ENCODE measurements at regions of chr18 and their contacts with region 1.

Region 1: GRCh38 chr18:12606592-12607315 is 51.2 kb downstream of the SPIRE1 start:
- DNase-seq: peak; percentile 90
- H3K4me3 ChIP-seq: peak overlapping the region in 1 of 3 experiments; percentile 9
- H3K27ac ChIP-seq: peak overlapping the region; percentile 74
- H3K4me1 ChIP-seq: peaks cover 37% of the 10 kb centered on the region
- H3K27me3 ChIP-seq: no peaks in the 10 kb centered on the region
- CTCF ChIP-seq: no peak
- POLR2A ChIP-seq: no peak

Region 2: DNA sequence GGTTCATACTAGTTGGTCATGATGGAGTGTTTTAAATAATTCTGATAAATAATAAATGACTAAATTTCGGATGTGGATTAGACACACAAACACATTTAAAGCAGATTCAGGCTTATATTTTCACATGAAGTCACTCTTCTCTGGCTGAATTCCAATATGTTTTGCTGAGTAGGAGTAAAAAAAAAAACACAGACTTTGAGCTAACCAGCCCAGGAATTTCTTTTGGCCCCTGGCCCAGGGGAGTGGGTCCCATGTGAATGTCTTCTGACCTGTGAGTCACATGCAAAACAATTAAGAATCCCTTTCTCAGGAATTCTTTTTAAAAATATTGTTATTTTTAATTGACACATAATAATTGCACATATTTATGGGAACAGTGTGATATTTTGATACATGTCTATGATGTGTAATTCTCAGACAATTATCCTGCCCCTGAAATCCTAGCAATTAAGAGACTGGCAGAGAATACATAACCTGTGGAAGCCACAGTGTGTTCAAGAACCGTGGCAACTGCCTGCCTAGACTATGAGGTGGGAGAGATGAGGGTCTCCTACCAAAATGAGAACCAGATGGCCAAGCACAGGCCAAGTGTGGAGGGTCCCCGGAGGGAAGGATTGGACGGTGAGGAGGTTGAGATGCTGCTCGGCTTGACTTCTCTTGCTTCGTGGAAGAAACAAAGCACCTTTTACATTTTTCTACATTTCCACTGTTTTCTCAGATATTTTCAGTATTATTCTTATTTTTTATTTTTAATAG is 1693.8 kb before region 1 on chr18:
- CTCF ChIA-PET with region 1: no interaction called
- POLR2A ChIA-PET with region 1: no interaction called
- dilution Hi-C with region 1: no loop called
- intact Hi-C with region 1: no loop called
- DNase-seq: peak; percentile 97
- H3K4me3 ChIP-seq: no peak overlapping the region
- H3K27ac ChIP-seq: peak overlapping the region; percentile 98
- H3K4me1 ChIP-seq: peaks cover 19% of the 10 kb centered on the region
- H3K27me3 ChIP-seq: no peaks in the 10 kb centered on the region
- CTCF ChIP-seq: no peak
- POLR2A ChIP-seq: no peak

Region 3: GRCh38 chr18:12417687-12418086 is 189.1 kb before region 1 on chr18:
- CTCF ChIA-PET with region 1: no interaction called
- POLR2A ChIA-PET with region 1: no interaction called
- dilution Hi-C with region 1: no loop called
- intact Hi-C with region 1: loop called (anchors 5 kb)
- DNase-seq: no peak
- H3K4me3 ChIP-seq: no peak overlapping the region
- H3K27ac ChIP-seq: no peak overlapping the region
- H3K4me1 ChIP-seq: peaks cover 13% of the 10 kb centered on the region
- H3K27me3 ChIP-seq: no peaks in the 10 kb centered on the region
- CTCF ChIP-seq: no peak
- POLR2A ChIP-seq: no peak

Region 4: GRCh38 chr18:12516049-12516630 is 90.6 kb before region 1 on chr18:
- CTCF ChIA-PET with region 1: no interaction called
- POLR2A ChIA-PET with region 1: no interaction called
- dilution Hi-C with region 1: no loop called
- intact Hi-C with region 1: no loop called
- DNase-seq: peak; percentile 60
- H3K4me3 ChIP-seq: no peak overlapping the region
- H3K27ac ChIP-seq: peak overlapping the region; percentile 24
- H3K4me1 ChIP-seq: peaks cover 15% of the 10 kb centered on the region
- H3K27me3 ChIP-seq: no peaks in the 10 kb centered on the region
- CTCF ChIP-seq: no peak
- POLR2A ChIP-seq: no peak

Region 5: GRCh38 chr18:12819322-12819721 is 212.6 kb after region 1 on chr18:
- CTCF ChIA-PET with region 1: no interaction called
- POLR2A ChIA-PET with region 1: no interaction called
- dilution Hi-C with region 1: no loop called
- intact Hi-C with region 1: no loop called
- DNase-seq: no peak
- H3K4me3 ChIP-seq: no peak overlapping the region
- H3K27ac ChIP-seq: no peak overlapping the region
- H3K4me1 ChIP-seq: no peaks in the 10 kb centered on the region
- H3K27me3 ChIP-seq: no peaks in the 10 kb centered on the region
- CTCF ChIP-seq: no peak
- POLR2A ChIP-seq: no peak

Region 6: DNA sequence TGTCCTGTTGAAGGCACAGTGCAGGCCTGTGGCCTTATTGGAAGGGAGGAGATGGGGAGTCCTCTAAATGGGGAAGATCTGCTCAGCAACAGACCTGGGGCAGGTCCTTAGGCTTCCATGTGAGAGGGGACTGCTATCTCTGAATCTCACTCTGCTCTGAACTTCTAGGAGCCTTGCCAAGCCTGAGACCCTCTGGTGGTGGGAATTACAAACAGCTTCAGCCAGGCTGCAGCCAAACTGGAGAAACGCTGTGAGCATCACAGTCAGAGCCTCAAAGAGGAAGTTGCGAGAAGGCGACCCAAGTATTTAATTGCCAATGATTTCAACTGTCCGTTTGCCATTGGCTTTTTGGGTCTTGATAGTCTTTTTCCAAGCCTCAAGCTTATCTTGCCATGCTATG is 1375.4 kb after region 1 on chr18:
- CTCF ChIA-PET with region 1: no interaction called
- POLR2A ChIA-PET with region 1: no interaction called
- dilution Hi-C with region 1: no loop called
- intact Hi-C with region 1: no loop called
- DNase-seq: no peak
- H3K4me3 ChIP-seq: no peak overlapping the region
- H3K27ac ChIP-seq: no peak overlapping the region
- H3K4me1 ChIP-seq: no peaks in the 10 kb centered on the region
- H3K27me3 ChIP-seq: no peaks in the 10 kb centered on the region
- CTCF ChIP-seq: no peak
- POLR2A ChIP-seq: no peak

Measured in endothelial cell of umbilical vein (primary cell).